Calu3 (cell line): ENCODE measurements at regions of chr5 and their contacts with region 1.

Region 1: DNA sequence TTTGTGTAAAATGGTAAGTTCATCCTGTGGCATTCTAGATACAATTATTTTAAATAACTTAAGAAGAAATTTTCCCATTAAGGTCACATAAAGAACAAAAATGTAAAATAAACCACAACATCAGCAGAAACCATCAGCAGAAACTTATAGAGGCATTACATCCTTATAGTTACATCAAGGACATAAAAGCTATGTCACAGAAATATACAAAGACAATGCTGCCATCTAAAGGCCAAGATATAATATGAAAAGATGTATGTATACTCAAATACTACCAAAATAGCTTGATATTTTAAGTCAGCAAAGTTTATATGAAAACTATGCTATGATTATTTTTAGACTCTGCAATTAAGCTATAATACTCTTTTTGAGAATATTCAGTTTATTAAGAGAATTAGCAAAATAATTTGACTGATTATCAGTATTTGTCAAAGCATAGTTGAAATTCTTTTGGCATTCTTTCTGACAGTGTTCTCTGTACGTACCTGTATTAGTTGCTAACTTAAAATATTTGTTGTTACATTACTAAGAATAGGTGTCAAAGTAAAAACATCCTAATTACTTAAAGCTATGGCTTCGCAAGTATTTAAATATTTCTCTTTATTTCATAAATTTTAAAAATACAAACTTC is 36.2 kb downstream of the FBXL17 start:
- DNase-seq: no peak
- H3K4me3 Mint-ChIP-seq: no peak overlapping the region
- H3K27ac Mint-ChIP-seq: no peak overlapping the region
- H3K4me1 Mint-ChIP-seq: peaks cover 9% of the 10 kb centered on the region
- H3K27me3 Mint-ChIP-seq: no peaks in the 10 kb centered on the region
- CTCF ChIP-seq: no peak

Region 2: DNA sequence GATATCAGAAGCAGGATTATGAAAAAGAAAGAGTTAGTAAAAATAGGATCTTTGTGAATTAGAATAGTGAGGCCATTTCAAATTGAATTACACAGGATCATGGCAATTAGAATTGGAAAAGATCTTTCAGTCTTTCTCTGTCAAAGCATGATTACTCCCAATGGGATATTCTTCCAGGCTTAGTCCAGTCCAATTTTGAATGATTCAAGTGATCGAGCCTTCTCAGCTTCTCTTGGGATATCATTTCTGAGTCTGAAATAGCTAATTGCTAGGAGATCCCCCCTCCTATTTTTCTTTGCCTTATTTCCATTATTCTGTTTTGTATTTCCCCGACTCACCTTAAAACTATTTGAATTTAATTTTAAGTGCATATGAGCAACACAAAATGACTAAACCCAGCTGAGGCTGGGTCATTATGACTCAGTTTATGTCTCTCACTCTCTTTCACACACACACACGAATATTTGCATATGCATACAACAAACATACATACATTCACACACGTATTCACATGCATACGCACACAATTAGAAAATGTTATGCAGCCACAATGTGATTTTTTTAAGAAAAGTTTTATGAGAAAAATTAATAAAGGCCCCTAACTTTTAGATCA is 640.1 kb before region 1 on chr5:
- CTCF ChIA-PET with region 1: no interaction called
- intact Hi-C with region 1: loop called (anchors 10 kb)
- DNase-seq: no peak
- H3K4me3 Mint-ChIP-seq: no peak overlapping the region
- H3K27ac Mint-ChIP-seq: no peak overlapping the region
- H3K4me1 Mint-ChIP-seq: no peaks in the 10 kb centered on the region
- H3K27me3 Mint-ChIP-seq: no peaks in the 10 kb centered on the region
- CTCF ChIP-seq: no peak

Region 3: DNA sequence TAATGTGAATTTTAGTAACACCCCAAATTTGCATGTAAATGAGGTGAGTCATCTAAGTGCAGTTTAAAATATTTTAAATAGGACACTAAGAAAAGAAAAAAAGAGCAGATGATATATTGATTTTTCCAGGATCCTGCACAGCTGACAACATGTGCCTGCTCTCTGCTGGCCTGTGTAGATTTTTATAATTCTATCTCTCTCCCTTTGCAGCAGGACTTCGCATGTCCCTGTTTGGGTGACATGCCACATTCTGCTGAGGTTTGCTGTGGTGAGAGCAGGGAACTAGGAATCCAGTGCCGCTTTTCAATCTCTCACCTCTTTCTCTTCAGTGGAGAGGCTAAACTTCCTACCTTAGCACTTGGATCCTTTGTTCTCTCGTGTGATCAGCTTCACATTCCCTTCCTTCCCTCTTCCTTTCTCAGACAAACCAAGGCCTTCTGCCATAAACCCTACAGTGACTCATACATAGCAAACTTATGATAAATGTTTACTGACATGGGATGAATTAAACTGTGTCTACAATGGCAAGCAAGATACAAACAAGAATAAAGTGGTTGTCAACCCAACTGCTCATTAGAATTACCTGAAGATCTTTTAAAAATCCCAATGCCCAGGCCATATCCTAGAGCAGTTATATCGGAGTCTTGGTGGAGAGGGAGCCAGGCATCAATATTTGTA is 476.1 kb before region 1 on chr5:
- CTCF ChIA-PET with region 1: no interaction called
- intact Hi-C with region 1: loop called (anchors 10 kb)
- DNase-seq: peak; percentile 18
- H3K4me3 Mint-ChIP-seq: peak overlapping the region; percentile 15
- H3K27ac Mint-ChIP-seq: peak overlapping the region; percentile 60
- H3K4me1 Mint-ChIP-seq: peaks cover 29% of the 10 kb centered on the region
- H3K27me3 Mint-ChIP-seq: no peaks in the 10 kb centered on the region
- CTCF ChIP-seq: no peak

Region 4: DNA sequence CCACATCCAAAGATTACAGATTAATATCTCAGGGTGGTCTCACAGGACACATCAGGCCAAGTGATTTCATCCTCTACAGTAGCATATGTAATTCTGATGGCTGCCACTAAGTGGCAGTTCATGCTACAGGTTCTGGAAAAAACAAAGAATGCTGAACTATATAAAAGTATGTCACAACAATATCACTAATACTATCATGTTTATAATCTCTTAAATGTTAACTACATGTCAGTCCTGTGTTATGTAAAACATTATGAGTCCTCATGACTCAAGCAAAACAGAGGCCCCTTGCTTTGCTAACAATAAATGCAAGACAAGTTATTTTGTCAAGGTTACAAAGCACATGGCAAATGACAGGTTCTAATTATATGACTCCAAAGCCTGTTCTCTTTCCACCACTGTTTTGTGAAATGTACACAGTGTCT is 196.9 kb before region 1 on chr5:
- CTCF ChIA-PET with region 1: interaction called, 3 read pairs
- intact Hi-C with region 1: loop called (anchors 1 kb)
- DNase-seq: peak; percentile 6
- H3K4me3 Mint-ChIP-seq: no peak overlapping the region
- H3K27ac Mint-ChIP-seq: no peak overlapping the region
- H3K4me1 Mint-ChIP-seq: no peaks in the 10 kb centered on the region
- H3K27me3 Mint-ChIP-seq: no peaks in the 10 kb centered on the region
- CTCF ChIP-seq: peak; percentile 61

Region 5: DNA sequence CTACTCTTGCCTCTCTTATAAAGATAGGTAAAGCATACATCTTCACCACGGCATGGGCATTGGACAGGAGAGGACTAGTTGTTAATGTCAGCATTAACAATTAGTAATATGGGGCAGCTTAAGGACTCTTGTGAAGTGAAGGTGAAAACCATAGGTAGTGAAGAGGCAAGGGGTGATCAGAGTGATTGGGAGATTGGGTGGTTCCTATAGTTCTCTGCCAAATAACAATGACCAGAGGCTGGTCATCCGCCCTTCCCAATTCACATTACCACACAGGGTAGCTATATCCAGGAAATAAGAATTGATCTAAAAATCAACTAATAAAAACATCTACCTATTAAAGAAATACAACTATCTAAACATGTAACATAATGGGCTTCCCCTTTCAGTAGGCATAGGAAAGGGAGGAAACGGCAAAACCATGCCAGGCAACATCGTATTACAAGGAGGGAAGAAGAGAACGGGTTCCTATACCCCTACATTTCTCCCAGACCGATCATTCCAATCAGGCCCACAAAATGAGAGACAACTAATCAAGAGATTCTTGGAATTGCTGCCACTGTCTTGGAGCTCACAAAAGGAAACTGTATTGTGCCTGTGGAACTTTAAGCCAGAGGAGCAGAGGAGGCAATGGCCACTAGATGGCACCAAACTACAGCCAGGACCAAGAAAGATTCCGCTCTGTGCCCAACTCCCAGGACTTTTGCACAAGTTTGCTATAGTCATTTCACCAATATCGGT is 85.4 kb before region 1 on chr5:
- CTCF ChIA-PET with region 1: interaction called, 34 read pairs
- intact Hi-C with region 1: loop called (anchors 1 kb)
- DNase-seq: peak; percentile 80
- H3K4me3 Mint-ChIP-seq: peak overlapping the region; percentile 6
- H3K27ac Mint-ChIP-seq: no peak overlapping the region
- H3K4me1 Mint-ChIP-seq: peaks cover 20% of the 10 kb centered on the region
- H3K27me3 Mint-ChIP-seq: no peaks in the 10 kb centered on the region
- CTCF ChIP-seq: peak; percentile 89

Region 6: DNA sequence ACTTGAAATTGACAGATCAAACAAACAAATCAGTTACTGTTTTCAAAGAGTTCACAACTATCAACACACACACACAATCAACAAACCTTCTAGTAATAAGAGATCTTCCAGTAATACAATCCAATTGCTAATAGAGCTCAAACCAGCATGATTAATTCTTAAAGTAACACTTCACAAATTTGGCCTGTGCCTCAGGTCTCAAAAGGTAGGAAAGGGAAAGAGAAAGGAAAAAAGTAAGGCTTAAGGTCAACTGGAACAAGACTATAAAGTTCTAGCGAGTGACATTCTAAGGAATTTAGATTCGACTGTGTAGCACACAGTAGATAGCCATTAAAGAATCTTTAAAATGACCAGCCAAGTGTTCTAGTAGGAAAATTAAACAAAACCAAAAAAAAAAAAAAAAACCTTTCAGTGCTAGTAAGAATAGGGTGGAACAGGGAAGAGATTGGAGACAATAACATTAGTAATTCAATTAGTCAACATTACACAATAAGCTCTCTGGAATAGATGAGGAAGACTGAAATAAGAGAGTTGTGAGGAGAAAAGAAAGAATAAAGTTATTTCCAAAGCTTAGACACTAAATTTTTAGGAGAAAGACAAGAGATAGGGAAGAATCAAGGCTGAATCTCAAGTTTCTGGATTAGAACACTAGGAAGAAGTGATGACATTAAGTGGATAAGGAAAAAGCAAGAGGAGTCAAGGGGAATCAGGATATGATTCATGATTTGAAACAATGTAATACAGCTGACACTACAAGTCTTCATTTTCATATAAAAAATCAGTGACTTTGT is 49.9 kb before region 1 on chr5:
- CTCF ChIA-PET with region 1: no interaction called
- intact Hi-C with region 1: loop called (anchors 5 kb)
- DNase-seq: no peak
- H3K4me3 Mint-ChIP-seq: no peak overlapping the region
- H3K27ac Mint-ChIP-seq: no peak overlapping the region
- H3K4me1 Mint-ChIP-seq: peaks cover 13% of the 10 kb centered on the region
- H3K27me3 Mint-ChIP-seq: no peaks in the 10 kb centered on the region
- CTCF ChIP-seq: no peak